ENCODE measurements at regions of chr2 and their contacts with region 1.

Region 1: DNA sequence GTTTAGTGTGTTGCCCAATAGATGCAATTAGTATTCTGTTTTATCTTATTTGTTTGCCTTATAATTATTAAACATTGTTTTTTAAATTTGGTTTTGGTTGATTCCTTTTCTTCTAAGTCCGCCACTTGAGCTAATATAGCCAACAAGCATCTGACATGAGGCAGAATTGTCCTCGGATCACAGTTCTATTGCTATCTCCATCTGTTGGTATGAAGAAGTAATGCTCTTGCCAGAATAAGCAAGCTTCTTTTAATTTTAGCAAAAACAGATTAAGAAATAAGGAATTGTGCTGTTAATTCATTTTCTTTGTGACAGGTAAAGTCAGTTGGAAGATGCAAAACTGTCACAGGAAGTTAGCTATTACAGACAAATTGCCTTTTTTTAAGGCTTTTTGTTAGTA is 54.3 kb downstream of the R3HDM1 start:
- DNase-seq: no peak
- ATAC-seq: no peak
- H3K4me3 ChIP-seq: no peak overlapping the region
- H3K27ac ChIP-seq: no peak overlapping the region
- H3K4me1 ChIP-seq: no peaks in the 10 kb centered on the region
- H3K27me3 ChIP-seq: no peaks in the 10 kb centered on the region
- CTCF ChIP-seq: no peak
- EP300 ChIP-seq: no peak
- POLR2A ChIP-seq: no peak
- RAD21 ChIP-seq: no peak

Region 2: GRCh38 chr2:135198481-135198880 is 387.1 kb before region 1 on chr2:
- CTCF ChIA-PET with region 1: no interaction called
- POLR2A ChIA-PET with region 1: no interaction called
- RAD21 ChIA-PET with region 1: no interaction called
- SMC1A ChIA-PET with region 1: no interaction called
- in situ Hi-C with region 1: no loop called
- intact Hi-C with region 1: no loop called
- DNase-seq: no peak
- ATAC-seq: no peak
- H3K4me3 ChIP-seq: no peak overlapping the region
- H3K27ac ChIP-seq: no peak overlapping the region
- H3K4me1 ChIP-seq: no peaks in the 10 kb centered on the region
- H3K27me3 ChIP-seq: no peaks in the 10 kb centered on the region
- CTCF ChIP-seq: no peak
- EP300 ChIP-seq: no peak
- POLR2A ChIP-seq: no peak
- RAD21 ChIP-seq: no peak

Region 3: DNA sequence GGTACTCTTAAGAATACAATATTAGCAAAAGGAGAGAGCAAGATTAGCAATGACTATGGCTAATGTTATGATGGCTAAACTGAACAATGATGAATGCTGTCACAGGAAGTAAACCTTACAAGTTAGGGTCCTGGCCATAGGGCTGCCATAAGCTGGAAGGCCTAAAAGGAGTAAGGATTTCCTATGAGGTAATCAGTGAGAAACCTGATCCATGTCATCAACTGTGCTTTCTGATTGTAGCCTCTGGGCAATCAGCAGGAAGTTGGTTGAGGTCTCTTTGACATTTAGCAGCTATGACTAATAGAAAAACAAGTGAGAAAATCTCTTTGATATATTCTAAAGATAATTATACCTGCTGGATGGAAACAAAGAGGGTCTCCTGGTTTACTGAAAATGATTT is 340.5 kb before region 1 on chr2:
- CTCF ChIA-PET with region 1: no interaction called
- POLR2A ChIA-PET with region 1: no interaction called
- RAD21 ChIA-PET with region 1: no interaction called
- SMC1A ChIA-PET with region 1: no interaction called
- in situ Hi-C with region 1: no loop called
- intact Hi-C with region 1: no loop called
- DNase-seq: no peak
- ATAC-seq: no peak
- H3K4me3 ChIP-seq: no peak overlapping the region
- H3K27ac ChIP-seq: no peak overlapping the region
- H3K4me1 ChIP-seq: no peaks in the 10 kb centered on the region
- H3K27me3 ChIP-seq: no peaks in the 10 kb centered on the region
- CTCF ChIP-seq: no peak
- EP300 ChIP-seq: no peak
- POLR2A ChIP-seq: no peak
- RAD21 ChIP-seq: no peak

Region 4: DNA sequence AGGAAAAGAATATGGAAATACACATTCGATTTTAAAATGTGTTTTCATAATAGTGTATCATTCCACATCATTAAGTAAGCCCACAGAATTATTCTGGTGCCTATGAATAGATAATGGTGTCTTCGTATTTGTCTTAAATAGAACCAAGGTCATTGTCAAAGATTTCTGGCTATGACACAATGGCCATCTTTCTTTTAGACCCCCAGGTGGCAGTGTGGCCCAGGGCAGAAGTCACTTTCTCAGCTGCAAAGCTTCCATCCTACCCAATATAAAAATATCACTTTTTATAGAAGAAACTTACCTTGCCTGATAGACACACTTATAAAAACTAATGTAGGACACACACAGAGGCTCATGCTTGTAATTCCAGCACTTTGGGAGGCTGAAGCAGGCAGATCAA is 112.0 kb before region 1 on chr2:
- CTCF ChIA-PET with region 1: interaction called, 6 read pairs
- POLR2A ChIA-PET with region 1: no interaction called
- RAD21 ChIA-PET with region 1: interaction called, 9 read pairs
- SMC1A ChIA-PET with region 1: interaction called, 3 read pairs
- in situ Hi-C with region 1: no loop called
- intact Hi-C with region 1: loop called (anchors 10 kb)
- DNase-seq: peak; percentile 5
- ATAC-seq: peak; percentile 86
- H3K4me3 ChIP-seq: no peak overlapping the region
- H3K27ac ChIP-seq: no peak overlapping the region
- H3K4me1 ChIP-seq: no peaks in the 10 kb centered on the region
- H3K27me3 ChIP-seq: no peaks in the 10 kb centered on the region
- CTCF ChIP-seq: peak; percentile 52 to 76 (median 62)
- EP300 ChIP-seq: no peak
- POLR2A ChIP-seq: no peak
- RAD21 ChIP-seq: peak; percentile 85

Region 5: GRCh38 chr2:135494503-135494902 is 91.1 kb before region 1 on chr2:
- CTCF ChIA-PET with region 1: no interaction called
- POLR2A ChIA-PET with region 1: no interaction called
- RAD21 ChIA-PET with region 1: no interaction called
- SMC1A ChIA-PET with region 1: no interaction called
- in situ Hi-C with region 1: no loop called
- intact Hi-C with region 1: no loop called
- DNase-seq: no peak
- ATAC-seq: no peak
- H3K4me3 ChIP-seq: no peak overlapping the region
- H3K27ac ChIP-seq: no peak overlapping the region
- H3K4me1 ChIP-seq: no peaks in the 10 kb centered on the region
- H3K27me3 ChIP-seq: no peaks in the 10 kb centered on the region
- CTCF ChIP-seq: no peak
- EP300 ChIP-seq: no peak
- POLR2A ChIP-seq: no peak
- RAD21 ChIP-seq: no peak

Region 6: GRCh38 chr2:135600915-135601314 is 15.3 kb after region 1 on chr2:
- CTCF ChIA-PET with region 1: interaction called, 6 read pairs
- POLR2A ChIA-PET with region 1: no interaction called
- RAD21 ChIA-PET with region 1: interaction called, 3 read pairs
- SMC1A ChIA-PET with region 1: interaction called, 11 read pairs
- in situ Hi-C with region 1: no loop called
- intact Hi-C with region 1: no loop called
- DNase-seq: no peak
- ATAC-seq: no peak
- H3K4me3 ChIP-seq: no peak overlapping the region
- H3K27ac ChIP-seq: no peak overlapping the region
- H3K4me1 ChIP-seq: no peaks in the 10 kb centered on the region
- H3K27me3 ChIP-seq: no peaks in the 10 kb centered on the region
- CTCF ChIP-seq: no peak; a peak in 1 of 6 replicates
- EP300 ChIP-seq: no peak
- POLR2A ChIP-seq: no peak
- RAD21 ChIP-seq: no peak